Activated T-helper 1 cell treated with anti-CD3 and anti-CD28 coated beads, Interleukin-12 subunit alpha, Interleukin-12 subunit beta, Interleukin-2, Interleukin-4 antibody, amounts not matched to agents 30 ng/mL and 10 ng/mL and 1 ng/mL, durations not matched to agents 14 hours and 24 hours and 36 hours (primary cell): ENCODE measurements at regions of chr12 and their contacts with region 1.

Region 1: DNA sequence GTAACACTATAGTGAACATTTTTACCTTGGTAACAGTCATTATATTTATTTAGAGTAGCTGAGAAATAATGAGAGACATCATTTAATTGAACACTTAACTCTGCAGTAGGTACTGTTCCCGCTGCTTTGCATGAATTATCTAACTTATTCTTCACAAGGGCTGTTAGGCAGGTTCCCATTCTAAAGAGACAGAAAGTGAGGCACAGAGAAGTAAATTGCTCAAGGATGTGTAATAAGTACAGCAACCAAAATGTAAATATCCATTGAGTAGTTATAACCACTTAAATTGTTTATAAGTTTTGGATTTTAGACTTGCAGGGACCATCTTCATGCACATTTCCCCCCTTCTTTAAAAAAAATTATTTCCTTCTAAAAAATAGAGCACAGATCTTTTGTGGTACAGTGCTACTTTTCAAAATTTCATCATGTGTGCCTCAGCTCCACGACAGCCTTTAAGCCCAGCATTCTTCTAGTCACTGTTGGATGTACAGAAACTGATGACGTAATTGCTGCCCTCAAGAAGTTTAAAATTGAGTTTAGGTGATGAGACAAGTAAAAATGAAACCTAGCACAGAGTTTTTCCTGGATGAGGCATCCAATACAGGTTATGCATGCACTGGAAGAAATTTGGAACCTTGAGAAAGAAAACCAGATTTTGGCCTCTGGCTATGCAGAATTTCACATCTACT is 6.0 kb upstream of the MANSC4 start:
- DNase-seq: no peak
- H3K4me3 Mint-ChIP-seq: no peak overlapping the region
- H3K27ac Mint-ChIP-seq: peak overlapping the region; percentile 68
- H3K4me1 Mint-ChIP-seq: peaks cover 40% of the 10 kb centered on the region
- H3K27me3 Mint-ChIP-seq: no peaks in the 10 kb centered on the region

Region 2: GRCh38 chr12:27807063-27807703 is 21.2 kb after region 1 on chr12:
- intact Hi-C with region 1: loop called (anchors 2 kb)
- DNase-seq: no peak
- H3K4me3 Mint-ChIP-seq: no peak overlapping the region
- H3K27ac Mint-ChIP-seq: peak overlapping the region; percentile 53
- H3K4me1 Mint-ChIP-seq: peaks cover 36% of the 10 kb centered on the region
- H3K27me3 Mint-ChIP-seq: peaks cover 11% of the 10 kb centered on the region